ENCODE measurements at regions of chr5 and their contacts with region 1.

Region 1: GRCh38 chr5:61449804-61450492 is 117.9 kb downstream of the ZSWIM6 start:
- DNase-seq: peak; percentile 70
- H3K4me3 ChIP-seq: no peak overlapping the region
- H3K27ac ChIP-seq: peak overlapping the region; percentile 85
- H3K27me3 ChIP-seq: no peaks in the 10 kb centered on the region
- CTCF ChIP-seq: no peak

Region 2: GRCh38 chr5:60633341-60633740 is 816.6 kb before region 1 on chr5:
- CTCF ChIA-PET with region 1: no interaction called
- POLR2A ChIA-PET with region 1: no interaction called
- DNase-seq: peak; percentile 41
- H3K4me3 ChIP-seq: no peak overlapping the region
- H3K27ac ChIP-seq: no peak overlapping the region
- H3K27me3 ChIP-seq: no peaks in the 10 kb centered on the region
- CTCF ChIP-seq: no peak

Region 3: DNA sequence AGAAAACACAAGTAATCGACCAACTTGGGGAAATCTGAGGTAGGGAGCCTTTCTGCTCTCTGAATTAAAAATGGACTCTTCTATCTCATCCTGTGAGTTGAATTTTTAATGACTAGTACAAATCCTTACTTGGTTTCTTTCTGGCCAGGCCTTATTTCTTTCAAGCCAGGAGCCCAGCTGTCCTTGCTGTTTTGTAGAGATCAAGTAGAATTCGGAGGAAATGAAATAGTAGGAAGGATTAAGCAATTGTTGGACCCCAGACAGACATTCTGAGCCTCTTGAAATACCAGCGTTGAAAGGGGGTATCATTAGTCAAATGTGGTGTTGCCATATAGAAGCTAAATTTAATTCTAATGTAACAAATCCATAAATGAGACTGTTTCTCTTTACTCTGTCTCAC is 234.0 kb before region 1 on chr5:
- CTCF ChIA-PET with region 1: no interaction called
- POLR2A ChIA-PET with region 1: no interaction called
- DNase-seq: no peak
- H3K4me3 ChIP-seq: no peak overlapping the region
- H3K27ac ChIP-seq: no peak overlapping the region
- H3K27me3 ChIP-seq: no peaks in the 10 kb centered on the region
- CTCF ChIP-seq: no peak

Region 4: DNA sequence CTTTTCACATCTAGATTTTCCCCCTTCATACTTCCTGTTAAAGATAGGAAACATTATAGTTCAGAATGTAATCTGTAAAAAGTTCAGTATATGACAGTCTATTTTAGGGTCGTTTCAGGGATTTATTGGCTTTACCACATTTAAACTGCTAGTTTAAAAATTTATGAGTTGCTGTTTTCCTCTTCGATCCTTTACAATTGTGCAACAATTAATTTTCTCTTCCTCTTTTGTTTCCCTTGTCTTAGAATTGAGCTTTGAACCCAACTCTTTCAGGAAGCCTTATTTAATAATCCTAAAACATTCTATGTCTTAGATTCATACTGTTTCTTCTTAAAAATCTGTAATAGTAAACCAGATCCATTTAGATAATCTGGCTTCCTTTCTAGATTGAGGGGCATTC is 101.5 kb before region 1 on chr5:
- CTCF ChIA-PET with region 1: interaction called, 14 read pairs
- POLR2A ChIA-PET with region 1: no interaction called
- DNase-seq: no peak
- H3K4me3 ChIP-seq: no peak overlapping the region
- H3K27ac ChIP-seq: no peak overlapping the region
- H3K27me3 ChIP-seq: no peaks in the 10 kb centered on the region
- CTCF ChIP-seq: no peak